Endothelial cell of umbilical vein (primary cell): ENCODE measurements at regions of chr22 and their contacts with region 1.

Region 1: GRCh38 chr22:19629720-19630419 is 84.4 kb upstream of the SEPTIN5 start:
- DNase-seq: peak; percentile 80
- H3K4me3 ChIP-seq: no peak overlapping the region
- H3K27ac ChIP-seq: no peak overlapping the region
- H3K4me1 ChIP-seq: no peaks in the 10 kb centered on the region
- H3K27me3 ChIP-seq: peaks cover 0 to 5% of the 10 kb centered on the region in 2 experiments
- CTCF ChIP-seq: peak; percentile 91 to 92
- POLR2A ChIP-seq: no peak

Region 2: DNA sequence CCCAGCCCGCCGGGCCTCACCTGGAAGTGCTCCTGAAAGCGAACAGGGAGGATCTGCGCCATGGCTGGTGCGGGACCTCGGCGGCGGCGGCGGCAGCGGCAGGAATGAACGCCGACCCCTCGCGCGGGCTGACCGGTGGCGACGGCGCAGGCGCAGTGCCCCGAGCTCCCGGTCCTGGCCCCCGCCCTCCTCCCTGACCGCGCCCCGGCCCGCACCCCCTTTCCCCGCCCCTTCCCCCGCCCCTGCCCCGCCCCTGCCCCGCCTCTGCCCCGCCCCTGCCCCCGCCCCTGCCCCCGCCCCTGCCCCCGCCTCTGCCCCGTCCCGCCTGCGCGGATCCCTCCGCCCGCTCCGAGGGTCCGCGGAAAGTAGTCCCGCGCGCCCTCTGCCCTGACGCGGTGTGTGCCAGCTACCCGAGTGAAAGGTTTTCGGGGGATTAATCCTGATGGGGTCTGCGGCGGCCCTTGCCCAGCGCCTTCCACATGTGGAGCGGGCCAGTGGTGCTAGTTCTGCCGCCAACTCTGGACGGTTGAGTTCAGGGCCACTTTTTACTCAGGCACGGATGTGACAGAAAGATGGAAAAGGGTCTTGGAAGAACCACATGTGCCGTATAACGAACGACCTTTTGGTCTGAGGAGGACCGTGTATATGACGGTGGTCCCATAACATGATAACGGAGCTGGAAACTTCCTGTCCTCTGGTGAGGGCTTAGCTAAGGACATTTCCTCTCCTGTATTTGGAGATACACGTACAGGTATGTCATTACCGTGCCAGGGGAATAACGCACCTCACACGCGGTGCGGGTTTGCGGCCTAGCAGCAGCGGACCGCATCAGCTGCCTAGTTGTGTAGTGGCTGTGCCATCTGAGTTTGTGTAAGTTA is 338.1 kb before region 1 on chr22 and contains the start of gene CLTCL1:
- CTCF ChIA-PET with region 1: interaction called, 13 read pairs
- POLR2A ChIA-PET with region 1: no interaction called
- dilution Hi-C with region 1: no loop called
- intact Hi-C with region 1: loop called (anchors 10 kb)
- DNase-seq: peak; percentile 70
- H3K4me3 ChIP-seq: peak within 1 kb of the TSS; percentile 78 to 89 (median 85)
- H3K27ac ChIP-seq: no peak within 1 kb of the TSS
- H3K4me1 ChIP-seq: peaks cover 11% of the 10 kb centered on the region
- H3K27me3 ChIP-seq: peaks cover 2 to 5% of the 10 kb centered on the region in 2 experiments
- CTCF ChIP-seq: no peak
- POLR2A ChIP-seq: peak; percentile 46
- total RNA-seq, gene CLTCL1: 6.2 and 6.8 TPM in 2 replicates

Region 3: DNA sequence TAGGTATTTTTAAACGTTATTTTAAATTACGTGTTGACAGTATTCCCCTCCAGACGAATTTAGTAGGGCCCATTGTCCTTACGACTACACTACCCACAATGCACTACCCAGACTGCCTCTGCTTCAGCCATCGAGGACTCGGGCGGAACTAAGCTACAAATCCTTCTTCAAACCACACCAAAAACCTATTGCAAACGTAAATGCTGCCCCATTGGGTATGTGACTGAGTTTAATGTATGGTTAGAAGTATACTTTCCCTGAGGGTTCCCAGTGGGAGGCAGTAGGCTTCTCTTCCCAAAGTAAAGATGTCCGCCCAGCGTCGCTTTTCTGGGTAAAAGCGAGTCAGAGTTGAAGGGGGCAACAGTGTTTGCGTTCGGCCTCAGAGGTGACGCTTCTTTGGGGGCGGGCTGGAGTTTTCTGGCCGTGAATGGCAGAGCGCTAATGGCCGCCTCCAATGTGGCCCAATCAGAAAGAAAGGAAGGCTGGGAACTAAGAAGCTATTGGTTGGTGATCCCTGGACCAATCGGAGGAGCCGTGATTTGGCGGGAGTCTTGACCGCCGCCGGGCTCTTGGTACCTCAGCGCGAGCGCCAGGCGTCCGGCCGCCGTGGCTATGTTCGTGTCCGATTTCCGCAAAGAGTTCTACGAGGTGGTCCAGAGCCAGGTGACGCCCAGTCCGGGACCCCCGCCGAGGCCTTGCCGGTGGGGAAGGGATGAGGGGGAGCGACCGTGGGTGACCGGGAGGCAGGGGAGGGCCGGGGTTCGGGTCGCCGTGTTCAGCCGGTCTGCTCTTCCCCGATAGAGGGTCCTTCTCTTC is 150.3 kb before region 1 on chr22 and contains the start of gene CDC45:
- CTCF ChIA-PET with region 1: interaction called, 67 read pairs
- POLR2A ChIA-PET with region 1: interaction called, 6 read pairs
- dilution Hi-C with region 1: no loop called
- intact Hi-C with region 1: loop called (anchors 1 kb)
- DNase-seq: peak; percentile 99
- H3K4me3 ChIP-seq: peak within 1 kb of the TSS; percentile 66 to 87 (median 83)
- H3K27ac ChIP-seq: peak within 1 kb of the TSS; percentile 100
- H3K4me1 ChIP-seq: peaks cover 48% of the 10 kb centered on the region
- H3K27me3 ChIP-seq: no peaks in the 10 kb centered on the region
- CTCF ChIP-seq: no peak
- POLR2A ChIP-seq: no peak
- total RNA-seq, gene CDC45: 40.6 and 44.7 TPM in 2 replicates

Region 4: GRCh38 chr22:19514831-19515565 is 114.9 kb before region 1 on chr22:
- CTCF ChIA-PET with region 1: interaction called, 50 read pairs
- POLR2A ChIA-PET with region 1: no interaction called
- dilution Hi-C with region 1: no loop called
- intact Hi-C with region 1: no loop called
- DNase-seq: no peak
- H3K4me3 ChIP-seq: no peak overlapping the region
- H3K27ac ChIP-seq: no peak overlapping the region
- H3K4me1 ChIP-seq: no peaks in the 10 kb centered on the region
- H3K27me3 ChIP-seq: no peaks in the 10 kb centered on the region
- CTCF ChIP-seq: no peak
- POLR2A ChIP-seq: no peak

Region 5: DNA sequence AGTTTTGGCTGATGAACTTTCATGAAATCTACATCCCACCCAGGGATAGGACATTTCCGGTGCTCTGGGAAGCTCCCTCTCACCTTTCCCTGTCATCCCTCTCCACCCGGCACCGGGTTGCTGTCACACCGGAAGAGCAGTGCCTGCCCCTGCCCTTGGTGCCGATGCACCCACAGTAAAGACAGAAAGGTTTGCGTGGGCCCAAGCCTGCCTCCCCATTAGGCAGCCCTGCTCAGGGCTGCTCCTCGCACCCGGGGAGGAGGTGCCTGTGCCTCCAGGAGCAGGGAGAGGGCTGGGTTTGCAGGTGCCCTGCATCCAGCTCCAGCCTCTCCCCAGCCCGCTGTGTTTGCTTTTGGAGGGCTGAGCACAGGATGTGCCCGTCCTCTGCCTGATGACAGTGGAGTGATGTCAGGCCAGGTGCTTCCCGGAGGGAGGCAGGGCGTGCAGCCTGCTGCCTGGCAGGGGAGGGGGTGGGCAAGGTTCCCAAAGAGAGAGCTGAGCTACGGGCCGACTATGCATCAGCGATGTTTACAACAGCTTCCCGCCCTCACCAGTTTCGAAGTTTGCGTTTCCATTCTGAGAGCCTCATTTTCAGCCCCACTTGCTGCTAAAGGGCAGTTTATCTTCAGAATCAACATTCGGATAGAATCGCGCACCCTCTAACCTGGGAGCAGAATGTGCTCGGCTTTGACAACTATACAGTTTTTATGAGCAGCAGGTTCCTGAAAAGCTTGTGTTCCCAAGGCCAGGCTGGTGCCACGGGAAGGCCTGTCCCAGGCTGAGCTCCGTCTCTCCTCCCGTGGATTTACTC is 22.5 kb before region 1 on chr22:
- CTCF ChIA-PET with region 1: interaction called, 16 read pairs
- POLR2A ChIA-PET with region 1: no interaction called
- dilution Hi-C with region 1: no loop called
- intact Hi-C with region 1: no loop called
- DNase-seq: peak; percentile 74
- H3K4me3 ChIP-seq: no peak overlapping the region
- H3K27ac ChIP-seq: no peak overlapping the region
- H3K4me1 ChIP-seq: peaks cover 2% of the 10 kb centered on the region
- H3K27me3 ChIP-seq: no peaks in the 10 kb centered on the region
- CTCF ChIP-seq: no peak
- POLR2A ChIP-seq: no peak

Region 6: GRCh38 chr22:19854778-19855503 is 225.1 kb after region 1 on chr22 and contains the starts of genes GNB1L and RTL10:
- CTCF ChIA-PET with region 1: no interaction called
- POLR2A ChIA-PET with region 1: no interaction called
- dilution Hi-C with region 1: no loop called
- intact Hi-C with region 1: no loop called
- DNase-seq: peak; percentile 98
- H3K4me3 ChIP-seq: peak within 1 kb of the TSS; percentile 78 to 97 (median 88)
- H3K27ac ChIP-seq: peak within 1 kb of the TSS; percentile 65
- H3K4me1 ChIP-seq: peaks cover 32% of the 10 kb centered on the region
- H3K27me3 ChIP-seq: no peaks in the 10 kb centered on the region
- CTCF ChIP-seq: no peak
- POLR2A ChIP-seq: peak; percentile 98
- total RNA-seq, gene GNB1L: 5.9 and 11.2 TPM in 2 replicates
- total RNA-seq, gene RTL10: 31.9 and 32.1 TPM in 2 replicates

Region 7: DNA sequence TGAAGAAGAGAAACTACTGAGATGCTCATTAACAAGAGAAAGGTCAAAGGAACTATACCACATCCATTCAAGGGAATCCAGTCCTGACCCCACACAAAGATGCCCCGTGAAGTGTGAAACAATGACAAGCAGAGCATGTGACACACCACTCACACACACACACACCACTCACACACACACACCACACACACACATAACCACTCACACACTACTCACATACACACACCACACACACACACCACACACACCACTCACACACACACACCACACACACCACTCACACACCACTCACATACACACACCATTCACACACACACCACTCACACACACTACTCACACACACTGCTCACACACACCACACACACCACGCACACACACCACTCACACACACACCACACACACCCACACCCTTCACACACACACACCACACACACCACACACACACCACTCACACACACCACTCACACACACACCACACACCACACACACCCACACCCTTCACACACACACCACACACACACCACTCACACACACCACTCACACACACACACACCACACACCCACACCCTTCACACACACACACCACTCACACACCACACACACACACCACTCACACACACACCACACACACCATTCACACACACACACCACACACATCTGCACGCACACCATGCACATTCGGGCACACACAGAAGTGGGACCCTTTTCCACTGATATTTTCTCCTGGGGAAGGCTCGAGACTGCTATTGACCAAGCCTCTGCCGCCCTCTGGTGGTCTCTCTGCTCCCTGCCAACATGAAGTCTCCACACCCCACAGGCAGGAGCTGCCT is 279.7 kb after region 1 on chr22:
- CTCF ChIA-PET with region 1: interaction called, 11 read pairs
- POLR2A ChIA-PET with region 1: no interaction called
- dilution Hi-C with region 1: no loop called
- intact Hi-C with region 1: loop called (anchors 1 kb)
- DNase-seq: peak; percentile 77
- H3K4me3 ChIP-seq: no peak overlapping the region
- H3K27ac ChIP-seq: no peak overlapping the region
- H3K4me1 ChIP-seq: peaks cover 3% of the 10 kb centered on the region
- H3K27me3 ChIP-seq: no peaks in the 10 kb centered on the region
- CTCF ChIP-seq: peak; percentile 86 to 88
- POLR2A ChIP-seq: no peak